A673 (cell line): ENCODE measurements at regions of chr4 and their contacts with region 1.

Region 1: DNA sequence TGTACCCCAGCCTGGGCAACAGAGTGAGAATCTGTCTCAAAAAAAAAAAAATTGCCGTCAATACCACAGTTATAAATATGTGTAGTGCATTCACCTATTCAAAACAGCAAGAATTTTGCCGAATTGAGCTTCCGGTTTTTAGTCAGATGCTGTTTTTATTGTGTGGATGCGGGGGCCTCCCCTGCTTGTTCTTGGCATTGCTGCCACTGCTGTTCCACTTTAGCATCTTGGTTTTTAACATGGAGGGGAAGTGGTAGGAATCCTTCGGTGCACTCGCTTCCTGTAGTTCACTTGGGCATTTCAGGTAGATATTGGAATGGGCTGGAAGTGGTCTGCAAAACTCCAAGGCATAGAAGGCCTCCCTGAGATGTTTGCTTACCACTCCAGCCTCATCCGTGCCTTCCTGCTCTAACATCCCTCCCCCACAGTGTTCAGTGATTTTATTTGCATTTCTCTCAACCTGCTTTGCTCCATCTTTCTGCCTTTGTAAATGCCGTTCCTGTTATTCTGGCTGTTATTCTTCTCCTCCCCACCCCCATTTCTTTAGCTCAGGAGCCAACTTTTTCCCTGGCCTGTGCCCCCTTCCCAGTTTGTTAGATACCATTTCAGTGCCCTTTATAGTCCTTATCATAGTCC is 25.5 kb downstream of the MOB1B start:
- DNase-seq: no peak
- H3K4me3 ChIP-seq: no peak overlapping the region
- H3K27ac ChIP-seq: no peak overlapping the region
- H3K4me1 ChIP-seq: no peaks in the 10 kb centered on the region
- H3K27me3 ChIP-seq: no peaks in the 10 kb centered on the region
- CTCF ChIP-seq: no peak

Region 2: DNA sequence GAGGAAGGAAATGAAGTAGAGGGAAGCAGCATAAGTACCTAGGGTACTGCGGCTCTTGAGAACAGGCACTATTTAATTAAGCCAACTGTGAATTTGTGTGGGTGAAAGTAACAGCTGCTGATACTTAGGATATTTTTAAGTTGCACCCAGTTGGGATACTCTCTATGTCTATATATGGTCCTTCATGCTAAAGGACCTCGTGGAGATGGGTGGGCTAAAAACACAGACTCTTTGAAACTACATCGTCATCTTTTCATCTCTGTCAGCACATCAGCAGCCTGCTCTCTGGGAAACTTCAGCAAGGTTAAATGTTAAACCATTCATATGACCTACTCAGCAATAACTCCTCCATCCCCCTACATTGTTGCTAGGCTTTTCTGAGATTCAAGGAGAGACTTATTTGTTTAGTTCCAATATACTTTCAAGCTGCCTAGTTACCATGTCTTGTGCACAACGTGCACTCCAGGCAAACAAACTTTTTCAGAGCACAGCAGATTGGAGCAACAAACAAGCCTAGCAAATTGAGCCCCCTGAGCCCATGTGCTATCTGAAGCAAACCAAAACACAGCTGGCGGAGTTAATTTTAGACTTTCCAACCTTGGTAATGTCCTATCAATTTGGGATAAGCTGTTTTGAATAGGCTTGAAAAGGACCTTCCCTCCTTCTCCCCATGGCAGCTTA is 31.7 kb before region 1 on chr4:
- CTCF ChIA-PET with region 1: no interaction called
- POLR2A ChIA-PET with region 1: no interaction called
- intact Hi-C with region 1: no loop called
- DNase-seq: no peak
- H3K4me3 ChIP-seq: no peak overlapping the region
- H3K27ac ChIP-seq: no peak overlapping the region
- H3K4me1 ChIP-seq: no peaks in the 10 kb centered on the region
- H3K27me3 ChIP-seq: no peaks in the 10 kb centered on the region
- CTCF ChIP-seq: no peak

Region 3: GRCh38 chr4:72194046-72194445 is 1266.4 kb after region 1 on chr4:
- CTCF ChIA-PET with region 1: no interaction called
- POLR2A ChIA-PET with region 1: interaction called, 13 read pairs
- intact Hi-C with region 1: no loop called
- DNase-seq: no peak
- H3K4me3 ChIP-seq: no peak overlapping the region
- H3K27ac ChIP-seq: no peak overlapping the region
- H3K4me1 ChIP-seq: no peaks in the 10 kb centered on the region
- H3K27me3 ChIP-seq: no peaks in the 10 kb centered on the region
- CTCF ChIP-seq: no peak